ENCODE measurements at regions of chr3 and their contacts with region 1.

Region 1: GRCh38 chr3:185527364-185527763 is 25.0 kb downstream of the LIPH start:
- DNase-seq: peak; percentile 57
- ATAC-seq: peak; percentile 56
- H3K4me3 ChIP-seq: no peak overlapping the region
- H3K27ac ChIP-seq: no peak overlapping the region
- H3K4me1 ChIP-seq: peaks cover 7% of the 10 kb centered on the region; the same call in 1 of the 2 replicates
- H3K27me3 ChIP-seq: no peaks in the 10 kb centered on the region
- CTCF ChIP-seq: no peak

Region 2: DNA sequence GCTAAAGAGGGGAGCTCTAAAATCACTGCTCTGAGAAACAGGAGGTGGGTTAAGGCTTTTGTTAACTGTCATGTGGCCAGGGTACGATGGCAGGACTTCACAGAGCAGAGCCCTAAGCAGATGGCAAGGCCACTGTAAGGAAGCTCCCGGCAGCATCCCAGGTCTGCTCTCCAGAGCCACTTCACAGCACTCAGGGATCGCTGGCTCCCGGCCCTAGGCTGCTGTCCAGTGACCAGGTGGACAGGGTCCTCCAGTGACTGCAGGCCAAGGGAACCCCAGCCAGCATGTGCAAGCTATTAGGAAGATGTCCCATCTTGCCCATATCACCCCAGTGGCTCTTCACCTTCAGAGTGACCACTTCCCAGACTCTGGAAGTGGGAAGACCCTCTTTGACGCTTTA is 38.9 kb before region 1 on chr3:
- CTCF ChIA-PET with region 1: no interaction called
- POLR2A ChIA-PET with region 1: interaction called, 13 read pairs
- intact Hi-C with region 1: no loop called
- DNase-seq: no peak
- ATAC-seq: no peak
- H3K4me3 ChIP-seq: no peak overlapping the region
- H3K27ac ChIP-seq: no peak overlapping the region
- H3K4me1 ChIP-seq: no peaks in the 10 kb centered on the region
- H3K27me3 ChIP-seq: no peaks in the 10 kb centered on the region
- CTCF ChIP-seq: no peak

Measured in PC-3 (cell line).